Activated B cell treated with CpG ODN at 0.5 μM for 24 hours (primary cell): ENCODE measurements at regions of chr3 and their contacts with region 1.

Region 1: DNA sequence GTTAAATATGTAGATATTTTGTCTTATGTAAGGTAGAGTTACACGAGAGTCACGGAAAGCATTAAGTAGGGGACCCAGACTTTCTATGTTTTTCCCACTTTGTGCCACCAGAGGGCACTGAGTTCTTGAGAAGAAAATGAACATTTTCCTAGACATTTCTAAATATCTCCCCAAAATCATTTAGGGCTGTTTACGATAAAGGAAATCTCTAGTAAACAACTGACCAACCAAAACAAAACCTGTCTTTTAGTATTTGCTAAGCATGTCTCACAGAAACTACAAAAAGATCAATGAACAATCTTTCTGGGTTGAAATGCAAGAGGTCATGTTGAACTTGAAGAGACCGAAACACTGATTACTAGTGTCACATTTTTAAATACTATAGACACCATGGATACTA is 16.1 kb downstream of the POU1F1 start:
- DNase-seq: no peak
- ATAC-seq: peak; percentile 45
- H3K4me3 Mint-ChIP-seq: no peak overlapping the region
- H3K27ac Mint-ChIP-seq: no peak overlapping the region
- H3K4me1 Mint-ChIP-seq: peaks cover 4% of the 10 kb centered on the region
- H3K27me3 Mint-ChIP-seq: no peaks in the 10 kb centered on the region
- CTCF ChIP-seq: peak; percentile 24

Region 2: GRCh38 chr3:86702381-86702958 is 557.8 kb before region 1 on chr3:
- CTCF ChIA-PET with region 1: no interaction called
- POLR2A ChIA-PET with region 1: no interaction called
- intact Hi-C with region 1: no loop called
- DNase-seq: no peak
- ATAC-seq: no peak
- H3K4me3 Mint-ChIP-seq: no peak overlapping the region
- H3K27ac Mint-ChIP-seq: no peak overlapping the region
- H3K4me1 Mint-ChIP-seq: no peaks in the 10 kb centered on the region
- H3K27me3 Mint-ChIP-seq: no peaks in the 10 kb centered on the region
- CTCF ChIP-seq: peak; percentile 25

Region 3: DNA sequence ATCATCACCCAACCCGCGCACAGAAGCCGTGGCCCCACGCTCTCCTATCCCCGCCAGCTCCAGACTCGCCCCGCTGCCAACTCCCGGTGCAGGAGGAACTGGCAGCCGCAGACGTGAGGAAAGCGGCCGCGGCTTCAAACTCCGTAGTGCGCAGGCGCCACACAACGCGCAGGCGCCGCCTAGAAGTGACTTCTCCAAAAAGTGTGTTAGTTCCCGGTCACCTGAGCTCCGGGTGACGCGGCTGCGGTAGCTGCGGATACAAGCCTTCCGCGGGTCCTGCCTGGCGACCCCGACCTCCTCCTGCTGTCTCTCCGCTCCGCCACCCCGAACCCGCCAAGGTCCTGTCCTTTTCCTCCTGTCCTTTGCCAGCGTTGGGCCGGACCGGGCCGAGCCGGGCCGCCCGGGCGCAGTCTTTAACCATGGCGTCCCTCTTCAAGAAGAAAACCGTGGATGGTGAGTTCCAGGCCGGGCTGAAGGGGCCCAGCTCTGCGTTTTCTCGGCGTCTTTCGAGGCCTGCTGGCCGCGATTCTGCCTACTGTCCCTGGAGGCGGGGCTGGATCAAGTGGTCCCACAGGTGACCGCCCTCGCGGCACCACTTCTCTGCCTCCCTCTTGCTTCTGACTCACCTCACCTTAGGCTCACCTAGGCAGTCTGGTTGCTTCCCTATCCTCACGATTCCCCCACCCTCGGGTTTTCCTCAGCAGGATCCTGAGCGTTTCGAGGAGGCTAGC is 33.0 kb before region 1 on chr3 and contains the start of gene CHMP2B:
- CTCF ChIA-PET with region 1: interaction called, 6 read pairs
- POLR2A ChIA-PET with region 1: no interaction called
- intact Hi-C with region 1: loop called (anchors 1 kb)
- DNase-seq: peak; percentile 92
- ATAC-seq: peak; percentile 90
- H3K4me3 Mint-ChIP-seq: peak within 1 kb of the TSS; percentile 99
- H3K27ac Mint-ChIP-seq: peak within 1 kb of the TSS; percentile 97
- H3K4me1 Mint-ChIP-seq: peaks cover 49% of the 10 kb centered on the region
- H3K27me3 Mint-ChIP-seq: peaks cover 7% of the 10 kb centered on the region
- CTCF ChIP-seq: no peak
- total RNA-seq, gene CHMP2B: 21.7 and 26.8 TPM in 2 replicates

Region 4: DNA sequence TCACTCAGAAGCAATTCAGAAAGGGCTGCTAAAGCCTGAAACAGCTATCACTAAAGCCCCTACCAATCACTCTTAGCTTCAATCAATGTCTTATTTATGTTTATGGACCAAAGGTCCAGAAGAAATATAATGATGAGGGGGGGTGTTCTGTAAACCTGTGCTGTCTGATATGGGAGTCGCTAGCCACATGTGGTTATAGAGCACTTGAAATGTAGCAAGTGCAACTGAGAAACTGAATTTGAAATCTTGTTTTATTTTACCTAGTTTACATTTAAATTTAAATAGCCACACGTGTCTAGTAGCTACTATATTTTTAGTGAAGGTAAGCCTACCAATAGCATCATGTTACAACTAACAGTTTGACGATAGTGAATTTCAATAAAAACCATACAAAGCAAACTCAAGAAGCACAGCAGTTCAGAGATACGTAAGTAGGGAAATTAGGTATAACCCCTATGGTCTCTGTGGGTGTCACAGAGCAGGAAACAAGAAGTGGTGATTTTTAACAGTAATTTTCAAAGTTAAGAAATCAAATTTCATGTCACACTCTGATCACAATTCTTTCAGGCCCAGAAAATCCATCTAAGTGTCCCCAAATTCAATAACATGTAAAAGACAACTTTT is 12.6 kb after region 1 on chr3:
- CTCF ChIA-PET with region 1: interaction called, 4 read pairs
- POLR2A ChIA-PET with region 1: no interaction called
- intact Hi-C with region 1: loop called (anchors 1 kb)
- DNase-seq: no peak
- ATAC-seq: peak; percentile 82
- H3K4me3 Mint-ChIP-seq: no peak overlapping the region
- H3K27ac Mint-ChIP-seq: no peak overlapping the region
- H3K4me1 Mint-ChIP-seq: peaks cover 25% of the 10 kb centered on the region
- H3K27me3 Mint-ChIP-seq: no peaks in the 10 kb centered on the region
- CTCF ChIP-seq: no peak

Region 5: DNA sequence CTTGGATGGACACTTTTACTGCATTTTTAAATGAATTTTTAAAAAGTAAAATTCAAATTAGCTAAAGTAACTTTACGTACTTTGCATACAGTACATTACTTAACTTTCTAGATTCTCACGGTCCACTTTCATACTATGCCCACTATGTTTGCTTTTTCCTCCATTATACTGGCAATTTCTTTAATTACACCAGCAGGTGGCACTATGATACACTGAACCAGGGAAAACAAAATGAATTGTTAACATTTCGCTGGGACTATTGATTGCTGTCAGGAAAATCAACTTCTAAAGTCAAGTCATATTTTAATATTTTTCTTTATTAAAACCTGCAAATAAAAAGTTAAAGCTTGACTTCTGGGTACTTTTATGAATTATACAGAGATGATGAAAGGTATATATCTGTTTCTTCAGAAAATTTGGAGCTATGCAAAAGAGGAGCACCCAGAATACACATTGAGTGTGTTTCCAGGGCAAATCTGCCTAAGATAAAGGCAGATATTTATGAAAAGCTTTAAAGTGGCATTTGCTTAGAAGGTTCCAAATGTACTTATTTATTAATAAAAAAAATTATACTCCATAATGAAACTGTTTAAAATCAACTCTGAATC is 37.9 kb after region 1 on chr3:
- CTCF ChIA-PET with region 1: interaction called, 11 read pairs
- POLR2A ChIA-PET with region 1: no interaction called
- intact Hi-C with region 1: no loop called
- DNase-seq: no peak
- ATAC-seq: peak; percentile 50
- H3K4me3 Mint-ChIP-seq: no peak overlapping the region
- H3K27ac Mint-ChIP-seq: no peak overlapping the region
- H3K4me1 Mint-ChIP-seq: no peaks in the 10 kb centered on the region
- H3K27me3 Mint-ChIP-seq: no peaks in the 10 kb centered on the region
- CTCF ChIP-seq: no peak